ENCODE measurements at regions of chr15 and their contacts with region 1.

Region 1: GRCh38 chr15:49155110-49155833 is at the start of gene COPS2:
- DNase-seq: peak; percentile 93
- H3K4me3 ChIP-seq: peak within 1 kb of the TSS; percentile 81
- H3K27ac ChIP-seq: peak within 1 kb of the TSS; percentile 62
- H3K4me1 ChIP-seq: peaks cover 29% of the 10 kb centered on the region
- H3K27me3 ChIP-seq: no peaks in the 10 kb centered on the region
- CTCF ChIP-seq: no peak
- total RNA-seq, gene COPS2: 47.8 and 71.8 TPM in 2 replicates

Region 2: DNA sequence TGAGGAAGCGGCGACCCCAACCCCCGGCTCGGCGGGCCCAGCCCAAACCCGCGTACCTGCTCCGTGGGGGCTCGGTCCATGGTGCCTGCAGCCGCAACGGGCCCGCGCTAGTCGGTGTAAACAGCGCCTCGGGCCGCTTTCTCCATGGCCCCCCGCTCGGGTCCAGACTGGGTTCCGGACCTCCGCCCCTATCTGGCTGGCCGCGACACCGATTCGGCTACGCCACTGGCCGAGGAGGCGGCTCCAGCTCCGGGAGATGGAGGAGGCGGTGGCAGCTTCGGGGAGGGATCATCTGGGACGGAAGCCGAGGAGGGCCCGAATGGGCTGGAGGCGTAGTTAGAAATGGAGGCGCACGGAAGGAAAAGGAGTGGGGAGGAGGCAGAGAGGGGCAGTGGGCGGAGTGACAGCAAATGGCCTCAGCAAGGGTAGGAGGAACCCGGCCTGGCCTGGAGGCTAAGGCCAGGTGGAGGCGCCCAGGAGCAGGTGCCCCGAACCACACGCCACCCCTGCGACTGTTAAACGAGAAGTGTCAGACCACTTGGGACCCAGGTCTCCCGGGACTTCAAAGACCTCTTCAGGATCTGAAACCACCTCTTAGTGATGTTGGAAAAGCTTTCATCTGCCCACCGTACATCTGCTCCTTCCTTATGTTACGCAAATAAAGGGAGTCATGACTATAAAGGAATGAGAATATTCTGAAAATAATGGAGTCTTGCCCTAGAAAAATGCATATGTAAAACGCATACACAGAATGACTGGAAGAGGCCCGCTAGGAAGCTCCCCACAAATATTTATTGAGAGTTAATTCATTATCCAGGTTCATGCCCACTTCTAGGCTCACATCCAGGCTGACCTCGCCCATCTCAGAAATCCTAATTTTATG is 108.8 kb before region 1 on chr15 and contains the start of gene SECISBP2L:
- CTCF ChIA-PET with region 1: interaction called, 5 read pairs
- POLR2A ChIA-PET with region 1: no interaction called
- intact Hi-C with region 1: loop called (anchors 5 kb)
- DNase-seq: peak; percentile 80 to 90
- H3K4me3 ChIP-seq: peak within 1 kb of the TSS; percentile 67
- H3K27ac ChIP-seq: peak within 1 kb of the TSS; percentile 11; the same call in 1 of the 2 replicates
- H3K4me1 ChIP-seq: peaks cover 15% of the 10 kb centered on the region
- H3K27me3 ChIP-seq: no peaks in the 10 kb centered on the region
- CTCF ChIP-seq: no peak
- total RNA-seq, gene SECISBP2L: 31.2 and 33.2 TPM in 2 replicates

Region 3: DNA sequence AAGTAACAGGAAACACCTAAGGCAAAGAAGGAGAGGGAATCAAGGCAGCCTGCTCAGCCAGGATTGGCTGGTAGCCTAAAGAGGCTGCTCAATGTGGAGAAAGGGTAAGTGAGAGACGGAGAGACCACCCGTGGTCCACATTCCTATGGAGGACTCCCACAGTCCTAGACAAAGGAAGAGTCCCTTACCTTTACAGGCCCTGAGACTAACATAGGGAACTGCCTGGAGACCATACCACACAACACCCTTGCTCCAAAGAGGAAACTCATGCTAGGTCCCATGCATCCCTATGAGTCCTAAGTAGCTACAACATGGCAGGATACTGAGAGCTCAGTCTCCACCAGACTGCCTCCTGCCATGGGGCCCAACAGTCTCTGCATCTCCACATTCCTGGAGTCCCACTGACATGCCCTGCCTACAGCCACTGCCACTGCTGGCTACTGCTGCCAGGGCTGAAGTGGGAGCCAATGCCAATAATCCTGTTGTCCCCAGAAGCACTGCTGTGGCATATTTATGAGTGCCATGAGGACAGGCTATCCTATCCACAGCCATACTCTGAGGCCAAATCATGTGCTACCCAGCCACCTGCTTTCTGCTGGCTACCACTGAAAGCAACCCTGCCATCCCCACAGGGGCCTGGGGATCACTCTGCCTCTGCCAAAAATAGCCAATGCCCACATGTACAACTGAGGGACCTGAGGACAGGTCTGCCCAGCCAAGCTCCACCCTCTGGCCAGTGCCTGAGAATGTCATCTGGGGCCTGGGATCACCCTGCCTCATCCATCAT is 44.9 kb before region 1 on chr15:
- CTCF ChIA-PET with region 1: no interaction called
- POLR2A ChIA-PET with region 1: no interaction called
- intact Hi-C with region 1: no loop called
- DNase-seq: no peak
- H3K4me3 ChIP-seq: no peak overlapping the region
- H3K27ac ChIP-seq: no peak overlapping the region
- H3K4me1 ChIP-seq: no peaks in the 10 kb centered on the region
- H3K27me3 ChIP-seq: no peaks in the 10 kb centered on the region
- CTCF ChIP-seq: no peak

Region 4: DNA sequence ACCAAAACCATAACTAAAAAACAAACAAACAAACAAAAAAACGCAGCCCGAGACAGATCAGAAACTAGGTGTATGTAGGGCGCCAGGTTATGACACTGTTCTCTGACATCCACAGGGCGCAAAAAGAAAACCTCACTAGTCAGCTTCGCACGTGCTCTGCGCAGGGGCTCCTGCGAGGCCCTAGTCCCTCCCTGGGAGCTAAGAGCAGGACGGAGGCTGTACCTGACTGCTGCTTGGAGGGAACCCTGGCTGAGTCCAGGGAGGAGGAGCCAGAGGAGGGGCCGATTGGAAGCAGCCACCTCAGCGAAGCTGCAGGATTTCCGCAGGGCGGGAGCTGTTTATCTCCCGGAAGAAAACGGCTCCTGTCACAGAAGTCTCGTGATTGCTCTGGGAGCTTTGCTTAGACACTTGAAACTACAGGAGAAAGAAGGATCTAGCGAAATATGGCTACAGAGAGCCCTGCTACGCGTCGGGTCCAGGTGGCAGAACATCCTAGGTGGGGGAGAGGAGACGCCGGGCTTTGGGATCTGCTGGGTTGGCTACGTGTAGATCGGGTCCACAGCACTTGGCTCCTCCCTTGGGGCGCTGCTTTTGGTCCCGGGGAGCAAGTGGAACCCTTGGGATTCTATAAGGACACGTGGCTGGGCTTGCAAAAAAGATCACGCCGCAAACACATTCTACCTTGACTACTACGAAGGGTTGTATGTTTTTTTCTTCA is 14.8 kb after region 1 on chr15 and contains the start of gene GALK2:
- CTCF ChIA-PET with region 1: interaction called, 4 read pairs
- POLR2A ChIA-PET with region 1: interaction called, 6 read pairs
- intact Hi-C with region 1: loop called (anchors 1 kb)
- DNase-seq: peak; percentile 82 to 84
- H3K4me3 ChIP-seq: peak within 1 kb of the TSS; percentile 71
- H3K27ac ChIP-seq: peak within 1 kb of the TSS; percentile 77
- H3K4me1 ChIP-seq: 0 out of 2 replicates have a peak, but pooled peaks cover 7% of the 10 kb centered on the region
- H3K27me3 ChIP-seq: no peaks in the 10 kb centered on the region
- CTCF ChIP-seq: no peak
- total RNA-seq, gene GALK2: 28.9 and 29.0 TPM in 2 replicates

Region 5: GRCh38 chr15:49620658-49621368 is 465.5 kb after region 1 on chr15 and contains the starts of genes DTWD1 and FAM227B:
- CTCF ChIA-PET with region 1: no interaction called
- POLR2A ChIA-PET with region 1: no interaction called
- intact Hi-C with region 1: loop called (anchors 10 kb)
- DNase-seq: peak; percentile 86 to 88
- H3K4me3 ChIP-seq: peak within 1 kb of the TSS; percentile 98
- H3K27ac ChIP-seq: peak within 1 kb of the TSS; percentile 75
- H3K4me1 ChIP-seq: peaks cover 13% of the 10 kb centered on the region
- H3K27me3 ChIP-seq: no peaks in the 10 kb centered on the region
- CTCF ChIP-seq: no peak
- total RNA-seq, gene DTWD1: 21.1 and 24.5 TPM in 2 replicates
- total RNA-seq, gene FAM227B: 1.4 and 3.3 TPM in 2 replicates

Measured in PC-9 (cell line).